Ascending aorta (tissue), 2 donors: ENCODE measurements at regions of chr15 and their contacts with region 1.

Region 1: GRCh38 chr15:42548253-42549031 is at the starts of genes HAUS2 and LRRC57:
- DNase-seq: peak; percentile 36 to 90
- H3K4me3 ChIP-seq: peak within 1 kb of the TSS; percentile 81 to 92
- H3K27ac ChIP-seq: peak within 1 kb of the TSS; percentile 92 to 94
- H3K4me1 ChIP-seq: peaks cover 0 to 22% of the 10 kb centered on the region in 2 donors
- H3K27me3 ChIP-seq: no peaks in the 10 kb centered on the region
- CTCF ChIP-seq: no peak
- total RNA-seq, gene HAUS2: 92.6 TPM
- total RNA-seq, gene LRRC57: 1.6 TPM

Region 2: DNA sequence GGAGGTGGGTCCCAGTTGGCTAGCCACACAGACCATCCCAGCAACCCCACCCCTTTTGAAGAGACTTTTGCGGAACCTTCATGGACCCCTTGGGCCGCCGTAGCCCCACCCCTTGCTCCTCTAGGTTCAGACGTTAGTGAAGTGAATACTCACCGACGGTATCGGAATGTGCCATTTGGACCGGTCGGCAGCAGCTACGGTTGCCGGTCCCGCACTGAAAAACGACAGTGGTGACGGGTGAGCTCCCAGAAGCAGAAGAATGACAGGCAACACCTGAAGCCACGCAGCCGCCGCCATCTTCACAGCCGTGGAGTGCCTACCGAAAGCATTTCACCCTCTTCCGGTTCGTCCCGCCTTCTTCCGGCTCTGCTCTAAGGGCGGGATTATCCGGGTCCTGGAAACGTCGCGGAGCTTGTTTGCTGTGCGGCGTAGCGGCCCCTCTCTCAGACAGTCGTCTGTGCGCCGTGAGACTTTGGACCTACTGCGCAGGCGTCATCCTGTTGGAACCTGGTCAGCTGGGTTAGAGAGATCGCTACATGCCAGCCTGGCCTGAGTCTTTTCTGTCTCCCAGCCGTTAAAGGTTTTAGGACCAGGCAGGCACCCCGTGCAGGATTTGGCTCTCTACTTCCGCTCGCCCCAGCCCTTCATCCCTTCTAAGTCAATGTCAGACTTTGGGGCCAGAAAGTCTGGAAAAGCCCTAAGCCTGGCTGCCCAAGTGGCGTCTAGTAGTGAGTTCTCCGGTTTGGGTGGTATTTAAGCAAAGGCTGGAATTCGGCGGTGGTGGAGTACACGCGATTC is 275.1 kb before region 1 on chr15 and contains the starts of genes GANC and TMEM87A:
- intact Hi-C with region 1: loop called (anchors 10 kb)
- DNase-seq: peak; percentile 93 to 99
- H3K4me3 ChIP-seq: peak within 1 kb of the TSS; percentile 74 to 89
- H3K27ac ChIP-seq: peak within 1 kb of the TSS; percentile 99 to 100
- H3K4me1 ChIP-seq: peaks cover 9 to 40% of the 10 kb centered on the region in 2 donors
- H3K27me3 ChIP-seq: no peaks in the 10 kb centered on the region
- CTCF ChIP-seq: no peak
- total RNA-seq, gene GANC: 22.9 TPM
- total RNA-seq, gene TMEM87A: 25.4 TPM

Region 3: GRCh38 chr15:42385206-42385979 is 163.0 kb before region 1 on chr15:
- intact Hi-C with region 1: no loop called
- DNase-seq: no peak
- H3K4me3 ChIP-seq: no peak overlapping the region
- H3K27ac ChIP-seq: no peak overlapping the region
- H3K4me1 ChIP-seq: no peaks in the 10 kb centered on the region
- H3K27me3 ChIP-seq: no peaks in the 10 kb centered on the region
- CTCF ChIP-seq: peak in 1 of 3 experiments; percentile 11

Region 4: GRCh38 chr15:42511010-42511396 is 37.4 kb before region 1 on chr15:
- intact Hi-C with region 1: no loop called
- DNase-seq: no peak
- H3K4me3 ChIP-seq: peak overlapping the region; percentile 19 to 24
- H3K27ac ChIP-seq: peak overlapping the region; percentile 71 to 76
- H3K4me1 ChIP-seq: peaks cover 0 to 38% of the 10 kb centered on the region in 2 donors
- H3K27me3 ChIP-seq: no peaks in the 10 kb centered on the region
- CTCF ChIP-seq: no peak

Region 5: DNA sequence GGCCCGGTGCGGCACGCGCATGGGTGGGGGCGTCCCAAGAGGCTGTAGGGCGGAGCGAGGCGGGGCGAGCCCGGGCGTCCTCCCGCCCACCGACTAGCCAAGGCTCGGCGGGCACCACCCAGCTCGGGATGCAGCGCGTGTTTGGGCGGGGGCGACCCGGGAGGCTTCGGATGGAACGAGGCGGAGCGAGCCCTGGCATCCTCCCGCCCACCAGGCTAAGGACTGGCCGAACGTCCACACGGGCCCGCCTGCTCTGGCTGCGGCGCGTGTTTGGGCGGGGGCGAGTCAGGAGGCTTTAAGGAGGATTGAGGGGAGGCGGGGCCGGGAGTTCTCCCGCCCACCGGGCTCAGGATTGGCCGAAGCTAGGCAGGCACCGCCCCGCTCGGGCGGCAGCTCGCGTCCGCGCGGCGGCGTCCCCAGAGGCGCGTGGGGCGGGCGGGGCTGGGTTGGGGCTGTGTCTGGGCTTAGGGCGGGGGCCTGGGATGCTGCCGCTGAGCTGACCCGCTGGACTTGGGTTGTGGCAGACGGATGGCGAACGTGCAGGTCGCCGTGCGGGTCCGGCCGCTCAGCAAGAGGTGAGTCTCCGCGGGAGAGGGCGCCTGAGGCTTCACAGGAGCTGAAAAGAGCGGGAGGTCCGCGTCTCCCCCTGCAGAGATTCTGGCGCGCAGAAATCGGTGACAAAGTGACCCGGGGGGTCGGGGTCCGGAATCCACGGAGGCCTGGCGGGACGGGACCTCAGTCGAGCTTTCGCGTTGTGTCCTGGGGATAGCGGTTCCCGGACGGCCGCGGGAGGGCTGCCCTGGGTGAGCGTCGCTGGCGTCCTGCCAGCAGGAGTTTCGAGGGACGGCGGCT is 27.0 kb after region 1 on chr15 and contains the start of gene STARD9:
- intact Hi-C with region 1: loop called (anchors 2 kb)
- DNase-seq: peak; percentile 97 to 99
- H3K4me3 ChIP-seq: peak within 1 kb of the TSS; percentile 88 to 91
- H3K27ac ChIP-seq: peak within 1 kb of the TSS; percentile 88 to 94
- H3K4me1 ChIP-seq: peaks cover 0 to 19% of the 10 kb centered on the region in 2 donors
- H3K27me3 ChIP-seq: no peaks in the 10 kb centered on the region
- CTCF ChIP-seq: no peak
- total RNA-seq, gene STARD9: 62.7 TPM

Region 6: DNA sequence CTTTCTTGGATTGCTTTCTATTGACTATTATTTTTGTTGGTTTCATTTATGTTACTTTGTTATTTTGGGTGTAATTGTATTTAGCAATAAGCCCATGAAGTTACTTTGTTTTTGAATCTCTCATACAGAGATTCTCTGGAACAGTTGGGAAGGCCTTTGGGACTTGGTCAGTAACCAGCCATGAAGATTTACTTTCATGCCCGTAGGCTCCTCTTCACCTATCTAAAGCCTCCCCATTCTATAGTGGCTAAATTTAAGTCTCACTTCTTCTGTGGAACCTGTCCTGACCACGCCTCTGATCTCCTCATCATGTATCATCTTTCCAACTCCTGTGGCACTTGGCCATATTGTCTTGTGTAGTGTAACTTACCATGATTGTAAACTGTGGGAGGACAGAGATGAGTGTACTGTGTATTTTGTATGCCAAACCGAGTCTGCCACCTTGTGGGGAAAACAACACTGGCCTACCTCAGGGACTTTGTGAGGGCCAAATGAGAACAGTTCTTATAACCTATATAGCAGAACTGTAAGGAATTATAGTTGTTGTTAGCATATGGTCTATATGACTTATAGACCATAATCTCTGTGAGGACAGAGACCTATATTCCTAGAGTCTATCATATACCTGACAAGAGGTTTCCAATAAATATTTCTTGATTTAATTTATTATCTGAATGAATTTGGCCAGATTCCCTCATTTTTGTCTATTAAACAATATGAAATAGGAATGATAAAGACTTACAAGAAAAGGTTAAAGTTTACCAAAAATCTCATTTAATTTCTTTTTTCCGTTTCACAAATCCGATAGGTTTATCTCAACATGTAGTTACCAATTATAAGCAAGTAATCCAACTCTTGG is 102.0 kb after region 1 on chr15:
- intact Hi-C with region 1: loop called (anchors 2 kb)
- DNase-seq: peak in 1 of 2 donors; percentile 74
- H3K4me3 ChIP-seq: no peak overlapping the region
- H3K27ac ChIP-seq: no peak overlapping the region
- H3K4me1 ChIP-seq: no peaks in the 10 kb centered on the region
- H3K27me3 ChIP-seq: no peaks in the 10 kb centered on the region
- CTCF ChIP-seq: peak; percentile 50 to 80 (median 60)